AG04450 (cell line): ENCODE measurements at regions of chr4 and their contacts with region 1.

Region 1: DNA sequence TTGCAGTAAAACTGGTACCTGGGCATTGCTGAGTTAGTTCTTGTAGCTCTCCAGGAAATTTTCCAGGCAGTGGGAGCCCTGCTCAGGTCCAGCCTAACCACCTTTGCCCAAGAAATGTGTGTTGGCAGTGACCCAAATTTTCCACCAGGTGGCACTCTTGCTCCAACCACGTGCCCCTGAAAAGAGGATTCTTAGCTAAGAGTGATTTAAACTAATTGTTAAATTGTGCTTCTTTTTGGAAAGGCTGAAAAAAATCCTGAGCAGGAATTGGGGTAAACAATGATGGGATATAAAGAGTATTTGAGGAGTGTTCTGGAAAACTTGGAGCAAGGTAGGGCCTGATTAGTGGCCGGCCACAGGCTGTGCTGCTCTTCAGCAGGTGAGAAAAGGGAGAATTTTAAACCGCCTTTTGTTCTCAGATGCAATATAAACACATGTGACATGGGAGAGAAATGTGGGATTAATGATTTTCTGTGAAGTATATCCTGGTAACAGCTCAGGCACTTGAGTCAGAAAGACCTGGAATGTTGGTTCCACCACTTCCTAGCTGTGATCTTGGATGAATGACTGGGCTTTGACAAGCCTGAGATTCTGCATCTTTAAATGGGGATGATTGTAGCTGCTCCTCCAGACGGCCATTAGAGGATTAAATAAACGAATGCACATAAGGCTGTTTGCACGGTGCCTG is 219.6 kb downstream of the PTTG2 start:
- DNase-seq: peak; percentile 52
- H3K4me3 ChIP-seq: no peak overlapping the region
- H3K27ac ChIP-seq: no peak overlapping the region
- H3K27me3 ChIP-seq: no peaks in the 10 kb centered on the region
- CTCF ChIP-seq: peak; percentile 92

Region 2: DNA sequence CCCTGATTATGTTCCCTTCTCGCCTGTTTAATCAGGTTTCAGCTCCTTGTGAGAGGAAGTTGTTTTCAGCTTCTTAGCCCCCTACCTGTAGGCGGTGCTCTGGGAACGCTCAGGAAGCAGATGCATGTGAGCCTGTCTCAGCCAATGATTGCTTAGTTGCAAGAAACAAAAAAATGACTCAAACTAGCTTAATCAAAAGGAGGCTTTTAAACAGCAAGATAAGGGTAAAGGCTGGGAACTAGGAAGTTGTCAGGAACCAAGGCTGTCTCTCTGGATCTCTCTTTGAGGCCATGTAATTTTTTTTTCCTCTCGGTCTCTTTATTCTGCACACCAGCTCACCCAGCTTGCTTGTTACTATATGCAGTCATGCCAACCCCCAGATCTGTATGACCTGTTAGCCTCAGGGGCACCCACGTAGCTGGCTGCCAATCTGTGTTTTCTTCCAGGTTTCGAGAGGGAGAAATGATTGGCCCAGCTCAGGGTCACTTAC is 110.5 kb before region 1 on chr4:
- CTCF ChIA-PET with region 1: interaction called, 12 read pairs
- POLR2A ChIA-PET with region 1: no interaction called
- DNase-seq: peak; percentile 30
- H3K4me3 ChIP-seq: no peak overlapping the region
- H3K27ac ChIP-seq: no peak overlapping the region
- H3K27me3 ChIP-seq: no peaks in the 10 kb centered on the region
- CTCF ChIP-seq: peak; percentile 65

Region 3: DNA sequence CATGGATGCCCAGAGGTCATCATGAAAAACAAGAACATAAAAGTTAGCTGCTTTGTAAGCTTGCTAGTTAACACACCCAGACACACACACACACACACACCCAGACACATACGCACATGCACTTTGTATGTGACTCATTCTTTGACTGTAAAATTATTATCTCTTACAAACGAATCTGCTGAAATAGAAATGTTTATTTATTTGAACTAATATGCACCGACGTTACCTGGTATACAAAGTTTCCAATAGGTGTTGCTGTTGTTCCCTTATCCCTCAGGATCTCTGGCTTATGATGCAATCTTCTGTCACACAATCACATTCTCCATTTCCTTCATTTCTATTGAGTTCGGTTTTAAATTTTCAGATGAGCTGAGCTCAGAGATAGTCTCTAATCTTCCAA is 10.3 kb before region 1 on chr4:
- CTCF ChIA-PET with region 1: interaction called, 13 read pairs
- POLR2A ChIA-PET with region 1: no interaction called
- DNase-seq: no peak
- H3K4me3 ChIP-seq: no peak overlapping the region
- H3K27ac ChIP-seq: no peak overlapping the region
- H3K27me3 ChIP-seq: no peaks in the 10 kb centered on the region
- CTCF ChIP-seq: no peak

Region 4: GRCh38 chr4:38675146-38676121 is 495.6 kb after region 1 on chr4:
- CTCF ChIA-PET with region 1: interaction called, 58 read pairs
- POLR2A ChIA-PET with region 1: no interaction called
- DNase-seq: peak; percentile 72
- H3K4me3 ChIP-seq: no peak overlapping the region
- H3K27ac ChIP-seq: peak overlapping the region; percentile 39
- H3K27me3 ChIP-seq: no peaks in the 10 kb centered on the region
- CTCF ChIP-seq: peak; percentile 91

Region 5: GRCh38 chr4:38723726-38724474 is 544.1 kb after region 1 on chr4:
- CTCF ChIA-PET with region 1: interaction called, 97 read pairs
- POLR2A ChIA-PET with region 1: interaction called, 3 read pairs
- DNase-seq: no peak
- H3K4me3 ChIP-seq: no peak overlapping the region
- H3K27ac ChIP-seq: no peak overlapping the region
- H3K27me3 ChIP-seq: no peaks in the 10 kb centered on the region
- CTCF ChIP-seq: no peak

Region 6: DNA sequence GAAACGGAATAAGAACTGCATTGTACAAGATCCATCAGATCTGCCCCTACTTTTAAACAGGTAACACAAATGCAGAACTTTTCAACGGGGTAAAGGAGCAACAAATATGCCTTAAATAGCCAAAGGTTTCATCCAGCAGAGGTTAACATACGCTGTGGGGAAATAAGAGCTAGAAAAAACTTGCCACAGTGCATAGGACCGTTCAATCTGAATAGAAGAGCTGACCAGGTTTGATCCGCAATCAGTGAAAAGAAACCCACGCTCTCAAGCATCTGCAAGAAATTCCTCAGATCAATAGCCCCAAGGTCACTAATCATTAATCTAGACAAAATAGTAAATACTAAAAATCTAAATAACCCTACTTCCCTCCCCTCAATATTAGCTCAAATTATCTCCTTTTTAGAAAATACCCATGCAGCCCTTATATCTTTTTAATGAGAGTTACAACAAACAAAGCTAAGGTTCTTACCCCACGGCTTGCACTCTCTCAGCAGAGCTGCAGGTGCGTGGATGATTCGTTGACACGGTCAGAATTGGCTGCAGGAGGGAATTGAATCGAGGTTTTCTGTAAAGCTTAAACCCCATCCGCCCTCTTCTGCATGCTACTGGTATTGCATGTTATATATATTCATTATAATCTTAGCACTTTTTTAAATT is 602.7 kb after region 1 on chr4 and contains the start of gene TLR10:
- CTCF ChIA-PET with region 1: interaction called, 23 read pairs
- POLR2A ChIA-PET with region 1: no interaction called
- DNase-seq: peak; percentile 16
- H3K4me3 ChIP-seq: no peak within 1 kb of the TSS
- H3K27ac ChIP-seq: no peak within 1 kb of the TSS
- H3K27me3 ChIP-seq: peaks cover 4% of the 10 kb centered on the region
- CTCF ChIP-seq: peak; percentile 64
- polyA plus RNA-seq, gene TLR10: not detected in 2 replicates